Activated B cell treated with CpG ODN at 0.5 μM for 24 hours (primary cell): ENCODE measurements at regions of chr1 and their contacts with region 1.

Region 1: GRCh38 chr1:206496131-206496793 is 11.1 kb upstream of the RASSF5 start:
- DNase-seq: peak; percentile 31
- ATAC-seq: peak; percentile 54
- H3K4me3 Mint-ChIP-seq: peak overlapping the region; percentile 58
- H3K27ac Mint-ChIP-seq: peak overlapping the region; percentile 84
- H3K4me1 Mint-ChIP-seq: peaks cover 44% of the 10 kb centered on the region
- H3K27me3 Mint-ChIP-seq: no peaks in the 10 kb centered on the region
- CTCF ChIP-seq: no peak

Region 2: DNA sequence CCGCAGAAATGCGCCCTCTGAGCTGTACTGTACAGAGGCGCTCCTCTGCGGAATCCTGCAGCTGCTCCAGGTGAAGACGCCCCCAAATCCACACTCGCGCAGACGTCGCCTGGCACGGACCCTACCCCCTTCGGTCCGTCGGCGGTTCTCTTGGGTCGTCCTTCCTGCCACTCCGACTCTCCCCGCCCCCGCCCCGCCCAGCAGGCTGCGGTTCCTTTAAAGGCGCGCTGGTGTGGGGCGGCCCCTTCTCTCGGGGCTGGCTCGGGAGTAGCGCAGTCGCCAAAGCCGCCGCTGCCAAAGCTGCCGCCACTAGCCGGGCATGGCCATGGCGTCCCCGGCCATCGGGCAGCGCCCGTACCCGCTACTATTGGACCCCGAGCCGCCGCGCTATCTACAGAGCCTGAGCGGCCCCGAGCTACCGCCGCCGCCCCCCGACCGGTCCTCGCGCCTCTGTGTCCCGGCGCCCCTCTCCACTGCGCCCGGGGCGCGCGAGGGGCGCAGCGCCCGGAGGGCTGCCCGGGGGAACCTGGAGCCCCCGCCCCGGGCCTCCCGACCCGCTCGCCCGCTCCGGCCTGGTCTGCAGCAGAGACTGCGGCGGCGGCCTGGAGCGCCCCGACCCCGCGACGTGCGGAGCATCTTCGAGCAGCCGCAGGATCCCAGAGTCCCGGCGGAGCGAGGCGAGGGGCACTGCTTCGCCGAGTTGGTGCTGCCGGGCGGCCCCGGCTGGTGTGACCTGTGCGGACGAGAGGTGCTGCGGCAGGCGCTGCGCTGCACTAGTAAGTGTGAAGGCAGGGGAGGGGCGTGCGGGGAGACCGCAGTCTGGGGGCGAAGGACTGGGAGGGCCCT is 11.2 kb after region 1 on chr1 and contains the start of gene RASSF5:
- CTCF ChIA-PET with region 1: interaction called, 3 read pairs
- POLR2A ChIA-PET with region 1: interaction called, 10 read pairs
- intact Hi-C with region 1: loop called (anchors 1 kb)
- DNase-seq: peak; percentile 80
- ATAC-seq: peak; percentile 91
- H3K4me3 Mint-ChIP-seq: peak within 1 kb of the TSS; percentile 82
- H3K27ac Mint-ChIP-seq: peak within 1 kb of the TSS; percentile 24
- H3K4me1 Mint-ChIP-seq: peaks cover 33% of the 10 kb centered on the region
- H3K27me3 Mint-ChIP-seq: peaks cover 17% of the 10 kb centered on the region
- CTCF ChIP-seq: no peak
- total RNA-seq, gene RASSF5: 114 and 116 TPM in 2 replicates

Region 3: DNA sequence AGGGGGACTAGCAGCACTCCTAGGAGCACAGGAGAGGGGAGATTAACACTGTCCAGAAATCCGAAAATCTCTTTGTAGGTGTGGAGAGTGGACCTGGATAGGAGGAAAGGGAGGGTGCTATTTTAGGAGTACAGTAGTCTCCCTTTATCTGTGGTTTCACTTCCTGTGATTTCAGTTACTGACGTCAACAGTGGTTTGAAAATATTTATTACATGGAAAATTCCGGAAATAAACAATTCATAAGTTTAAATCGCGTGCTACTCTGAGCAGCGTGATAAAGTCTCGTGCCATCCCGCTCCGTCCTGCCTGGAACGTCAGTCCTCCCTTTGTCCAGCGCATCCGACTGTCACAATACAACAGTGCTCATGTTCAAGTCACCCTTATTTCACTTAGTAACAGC is 394.4 kb after region 1 on chr1:
- CTCF ChIA-PET with region 1: no interaction called
- POLR2A ChIA-PET with region 1: no interaction called
- intact Hi-C with region 1: no loop called
- DNase-seq: no peak
- ATAC-seq: no peak
- H3K4me3 Mint-ChIP-seq: no peak overlapping the region
- H3K27ac Mint-ChIP-seq: no peak overlapping the region
- H3K4me1 Mint-ChIP-seq: peaks cover 9% of the 10 kb centered on the region
- H3K27me3 Mint-ChIP-seq: no peaks in the 10 kb centered on the region
- CTCF ChIP-seq: no peak